Activated T-helper 2 cell treated with anti-CD3 and anti-CD28 coated beads, Interferon-gamma antibody, Interleukin-2, Interleukin-4, amounts not matched to agents 10 μg/mL and 5 μg/mL and 100 μg/mL, durations not matched to agents 14 hours and 24 hours and 36 hours (primary cell): ENCODE measurements at regions of chr2 and their contacts with region 1.

Region 1: GRCh38 chr2:205680067-205680466 is 2.2 kb upstream of the NRP2 start:
- DNase-seq: peak; percentile 41
- H3K4me3 Mint-ChIP-seq: peak overlapping the region; percentile 28
- H3K27ac Mint-ChIP-seq: no peak overlapping the region
- H3K4me1 Mint-ChIP-seq: peaks cover 47% of the 10 kb centered on the region
- H3K27me3 Mint-ChIP-seq: peaks cover 26% of the 10 kb centered on the region

Region 2: GRCh38 chr2:204871231-204871953 is 808.7 kb before region 1 on chr2:
- intact Hi-C with region 1: loop called (anchors 2 kb)
- DNase-seq: no peak
- H3K4me3 Mint-ChIP-seq: no peak overlapping the region
- H3K27ac Mint-ChIP-seq: no peak overlapping the region
- H3K4me1 Mint-ChIP-seq: peaks cover 35% of the 10 kb centered on the region
- H3K27me3 Mint-ChIP-seq: peaks cover 25% of the 10 kb centered on the region

Region 3: DNA sequence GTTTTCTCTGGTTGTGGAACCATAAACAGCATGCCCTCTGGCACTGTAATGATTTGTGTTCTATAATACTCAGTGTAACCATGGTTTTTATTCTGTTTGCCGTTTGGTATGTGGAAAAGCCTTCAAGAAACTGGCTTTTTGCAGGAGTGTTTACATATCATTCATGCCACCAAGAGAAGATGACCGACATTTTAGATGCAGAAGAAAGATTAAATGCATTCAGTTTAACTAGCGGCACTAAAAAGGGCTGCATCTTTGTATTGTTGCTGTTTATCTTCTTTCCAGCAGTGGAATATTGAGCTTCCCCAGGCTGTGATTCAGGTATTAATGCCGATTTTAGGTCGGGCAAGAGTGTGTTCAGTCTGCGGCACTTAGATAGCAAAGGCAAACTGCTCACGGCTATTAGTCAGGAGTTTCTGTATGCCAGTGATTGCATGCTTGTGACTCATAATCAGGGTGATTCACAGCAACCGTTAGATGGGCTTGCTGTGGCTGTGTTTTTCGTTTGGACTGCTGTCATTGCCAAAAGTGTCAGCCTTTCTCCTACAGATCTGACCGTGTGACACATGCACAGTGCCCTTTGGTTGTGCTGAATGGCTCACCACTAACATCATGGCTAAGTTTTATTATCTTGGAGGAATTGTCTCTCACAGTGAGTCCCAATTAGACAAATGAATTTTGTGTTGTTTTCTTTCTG is 655.1 kb before region 1 on chr2:
- intact Hi-C with region 1: loop called (anchors 2 kb)
- DNase-seq: peak; percentile 35
- H3K4me3 Mint-ChIP-seq: peak overlapping the region; percentile 22
- H3K27ac Mint-ChIP-seq: peak overlapping the region; percentile 43
- H3K4me1 Mint-ChIP-seq: peaks cover 32% of the 10 kb centered on the region
- H3K27me3 Mint-ChIP-seq: no peaks in the 10 kb centered on the region

Region 4: GRCh38 chr2:205474741-205475415 is 205.2 kb before region 1 on chr2:
- intact Hi-C with region 1: loop called (anchors 1 kb)
- DNase-seq: no peak
- H3K4me3 Mint-ChIP-seq: no peak overlapping the region
- H3K27ac Mint-ChIP-seq: no peak overlapping the region
- H3K4me1 Mint-ChIP-seq: peaks cover 5% of the 10 kb centered on the region
- H3K27me3 Mint-ChIP-seq: peaks cover 50% of the 10 kb centered on the region

Region 5: DNA sequence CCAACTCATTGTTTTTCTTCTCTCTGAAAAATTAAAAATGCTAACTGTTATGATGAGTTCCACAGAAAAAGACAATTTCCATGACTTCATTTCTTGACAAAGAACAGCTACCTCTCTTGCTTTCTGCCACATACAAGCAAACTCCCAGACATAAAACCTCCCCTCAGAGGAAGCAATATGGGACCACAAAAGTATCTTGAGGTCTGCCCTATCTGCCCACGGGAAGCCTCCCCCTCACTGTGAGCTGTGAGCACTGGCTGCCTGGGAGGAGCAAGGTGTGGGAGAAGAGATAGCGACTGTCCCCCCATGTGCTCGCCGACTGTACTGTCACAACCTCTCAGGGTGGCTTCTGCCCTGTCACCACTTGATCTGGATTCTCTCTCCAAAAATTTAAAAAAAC is 67.4 kb before region 1 on chr2:
- intact Hi-C with region 1: loop called (anchors 1 kb)
- DNase-seq: peak; percentile 41
- H3K4me3 Mint-ChIP-seq: peak overlapping the region; percentile 38
- H3K27ac Mint-ChIP-seq: peak overlapping the region; percentile 91
- H3K4me1 Mint-ChIP-seq: peaks cover 60% of the 10 kb centered on the region
- H3K27me3 Mint-ChIP-seq: no peaks in the 10 kb centered on the region

Region 6: DNA sequence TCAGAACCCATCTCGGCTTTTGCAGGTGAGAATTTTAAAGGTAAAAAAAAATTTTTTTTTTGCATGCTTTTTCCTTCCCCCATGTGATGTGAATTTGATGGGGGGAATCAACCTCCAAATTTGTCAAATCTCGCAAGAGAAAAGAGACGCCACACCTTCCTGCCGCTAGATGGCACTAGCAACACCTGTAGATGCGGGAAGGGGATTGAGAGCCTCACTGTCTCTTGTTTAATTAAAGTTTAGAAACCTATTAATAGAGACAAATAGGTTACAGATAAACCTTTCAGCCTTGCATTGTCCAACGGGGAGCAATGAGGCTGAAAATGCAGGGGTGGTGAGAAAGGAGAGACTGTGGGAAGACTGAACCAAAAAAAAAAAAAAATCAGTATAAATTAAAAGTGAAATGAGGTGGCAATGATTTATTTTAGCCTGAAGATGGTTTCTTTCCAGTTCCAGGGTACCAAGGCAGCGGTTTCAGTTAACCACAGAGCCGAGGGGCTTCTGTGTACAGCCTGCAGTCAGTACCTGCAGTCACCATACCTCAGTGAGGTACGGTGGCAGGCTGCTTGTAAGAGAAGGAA is 86.8 kb after region 1 on chr2:
- intact Hi-C with region 1: loop called (anchors 5 kb)
- DNase-seq: peak; percentile 22
- H3K4me3 Mint-ChIP-seq: no peak overlapping the region
- H3K27ac Mint-ChIP-seq: no peak overlapping the region
- H3K4me1 Mint-ChIP-seq: peaks cover 12% of the 10 kb centered on the region
- H3K27me3 Mint-ChIP-seq: peaks cover 5% of the 10 kb centered on the region